Right lobe of liver (tissue), 6 donors: ENCODE measurements at regions of chr2 and their contacts with region 1.

Region 1: DNA sequence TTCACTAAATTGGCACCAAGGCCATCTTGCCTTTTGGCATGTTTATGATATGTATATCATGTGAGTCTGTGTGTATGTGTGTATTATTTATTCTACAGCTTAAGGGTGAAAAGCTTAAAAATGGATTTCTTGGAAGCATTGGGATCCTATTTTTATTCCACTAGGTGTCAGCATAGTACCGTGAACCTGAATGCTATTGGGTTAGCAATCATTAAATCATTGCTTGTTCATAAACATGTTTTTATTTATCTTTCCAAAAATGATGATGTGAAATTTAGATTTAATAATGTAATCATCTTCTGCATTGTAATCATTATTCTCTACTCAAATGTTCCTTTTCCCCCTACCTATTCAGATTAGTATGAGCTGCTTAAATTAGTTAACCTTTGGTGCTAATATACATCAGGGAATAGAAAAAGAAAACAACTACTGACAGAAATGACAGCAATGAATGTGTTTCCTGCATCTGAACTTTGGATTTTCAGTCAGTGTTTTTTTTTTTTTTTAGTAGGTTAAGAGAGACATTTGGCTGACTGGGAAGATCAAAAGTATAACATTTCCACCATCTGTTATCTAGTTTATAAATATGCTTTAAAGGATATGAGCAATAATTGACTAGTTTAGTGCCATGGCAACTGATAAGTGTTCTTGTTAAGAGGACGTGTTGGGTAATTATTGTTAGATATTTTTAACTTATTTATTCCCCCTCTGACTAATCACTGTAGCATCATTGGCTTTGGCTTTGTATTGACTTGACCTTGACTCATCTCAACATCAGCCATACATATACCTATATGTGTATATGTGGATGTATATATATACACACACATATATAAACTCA is 14.1 kb upstream of the ZSWIM2 start:
- DNase-seq: no peak
- ATAC-seq: peak; percentile 58 to 70 (median 62)
- H3K4me3 ChIP-seq: no peak overlapping the region
- H3K27ac ChIP-seq: no peak overlapping the region
- H3K4me1 ChIP-seq: no peaks in the 10 kb centered on the region
- H3K27me3 ChIP-seq: no peaks in the 10 kb centered on the region
- CTCF ChIP-seq: peak; percentile 61 to 77 (median 74)
- POLR2A ChIP-seq: no peak

Region 2: DNA sequence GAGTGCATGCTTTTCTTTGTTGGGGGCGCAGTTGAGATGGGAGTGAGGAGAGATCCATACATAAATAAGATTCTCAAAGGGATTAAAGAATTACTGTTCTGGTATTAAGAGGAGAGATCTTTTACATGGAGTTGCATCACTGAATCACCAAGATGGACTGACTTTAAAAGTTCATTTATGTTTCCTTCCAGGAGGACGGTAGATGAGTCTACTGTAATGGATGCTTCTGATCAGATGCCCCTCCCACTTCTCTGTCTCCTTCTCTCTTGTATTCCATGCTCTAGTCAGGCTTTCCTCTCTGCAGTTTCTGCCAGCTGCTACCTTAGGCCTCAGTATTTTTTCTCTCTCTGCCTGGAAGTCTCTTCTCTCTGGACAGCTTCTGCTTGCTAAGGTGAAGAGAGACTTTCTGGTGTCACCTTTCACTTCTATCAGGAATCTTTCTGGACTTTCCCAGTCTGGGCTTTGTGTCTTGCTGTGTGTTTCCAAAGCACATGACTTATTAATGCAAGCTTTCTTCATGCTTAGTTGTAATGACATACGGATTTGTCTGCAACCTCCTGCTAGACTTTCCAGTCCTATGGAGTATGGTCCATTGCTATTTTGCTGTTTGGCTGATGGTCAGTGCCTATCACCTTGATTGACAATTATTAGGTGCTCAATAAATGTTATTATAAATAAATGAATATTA is 145.6 kb before region 1 on chr2:
- intact Hi-C with region 1: no loop called
- DNase-seq: no peak
- ATAC-seq: no peak
- H3K4me3 ChIP-seq: no peak overlapping the region
- H3K27ac ChIP-seq: no peak overlapping the region
- H3K4me1 ChIP-seq: no peaks in the 10 kb centered on the region
- H3K27me3 ChIP-seq: no peaks in the 10 kb centered on the region
- CTCF ChIP-seq: no peak
- POLR2A ChIP-seq: no peak

Region 3: GRCh38 chr2:187057466-187057865 is 194.4 kb after region 1 on chr2:
- intact Hi-C with region 1: no loop called
- DNase-seq: no peak
- ATAC-seq: no peak
- H3K4me3 ChIP-seq: no peak overlapping the region
- H3K27ac ChIP-seq: no peak overlapping the region
- H3K4me1 ChIP-seq: peaks cover 0 to 12% (median 0%) of the 10 kb centered on the region in 4 donors
- H3K27me3 ChIP-seq: no peaks in the 10 kb centered on the region
- CTCF ChIP-seq: no peak
- POLR2A ChIP-seq: no peak

Region 4: DNA sequence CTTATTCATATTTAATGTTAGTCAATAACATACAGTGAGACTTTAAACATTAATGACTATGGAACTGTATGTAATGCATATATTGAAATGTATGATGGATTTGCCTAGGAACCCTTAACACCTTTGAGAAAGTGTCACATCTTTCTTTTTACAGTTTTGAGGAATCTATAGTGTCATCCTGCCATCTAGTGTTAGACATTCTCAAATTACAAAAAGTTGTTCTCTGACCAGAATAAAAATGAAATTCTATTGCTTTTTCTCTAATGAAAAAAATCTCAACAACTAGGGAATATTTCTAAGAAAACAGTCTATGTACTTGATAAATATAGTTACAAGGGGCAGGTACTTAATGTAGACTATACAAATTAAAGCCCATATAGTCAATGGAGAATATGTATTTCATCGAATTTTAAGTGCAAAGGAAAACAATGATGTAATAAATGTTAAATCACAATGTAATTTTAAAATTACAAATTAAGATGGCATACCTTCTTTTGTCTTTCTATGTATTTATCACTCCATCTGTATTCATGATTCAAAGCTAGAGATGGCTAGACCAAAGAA is 590.1 kb after region 1 on chr2:
- intact Hi-C with region 1: loop called in 1 of 2 experiments (anchors 10 kb)
- DNase-seq: no peak
- ATAC-seq: peak; percentile 38 to 56 (median 53)
- H3K4me3 ChIP-seq: no peak overlapping the region
- H3K27ac ChIP-seq: no peak overlapping the region
- H3K4me1 ChIP-seq: no peaks in the 10 kb centered on the region
- H3K27me3 ChIP-seq: no peaks in the 10 kb centered on the region
- CTCF ChIP-seq: peak; percentile 42 to 57 (median 51)
- POLR2A ChIP-seq: no peak